Esophagus squamous epithelium (tissue), 5 donors: ENCODE measurements at regions of chr4 and their contacts with region 1.

Region 1: GRCh38 chr4:41882625-41883347 is 52.4 kb upstream of the TMEM33 start:
- DNase-seq: no peak
- H3K4me3 ChIP-seq: peak overlapping the region in 3 of 4 donors; percentile 25 to 62 (median 42)
- H3K27ac ChIP-seq: no peak overlapping the region
- H3K4me1 ChIP-seq: peaks cover 16 to 32% (median 19%) of the 10 kb centered on the region in 3 donors
- H3K27me3 ChIP-seq: peaks cover 16 to 98% (median 25%) of the 10 kb centered on the region in 4 donors
- CTCF ChIP-seq: peak; percentile 67 to 95 (median 80)
- POLR2A ChIP-seq: no peak

Region 2: GRCh38 chr4:41281038-41281634 is 601.6 kb before region 1 on chr4:
- intact Hi-C with region 1: loop called (anchors 10 kb)
- DNase-seq: no peak
- H3K4me3 ChIP-seq: no peak overlapping the region
- H3K27ac ChIP-seq: no peak overlapping the region
- H3K4me1 ChIP-seq: peaks cover 0 to 6% (median 0%) of the 10 kb centered on the region in 3 donors
- H3K27me3 ChIP-seq: peaks cover 0 to 10% (median 0%) of the 10 kb centered on the region in 4 donors
- CTCF ChIP-seq: peak; percentile 73 to 92 (median 86)
- POLR2A ChIP-seq: no peak

Region 3: DNA sequence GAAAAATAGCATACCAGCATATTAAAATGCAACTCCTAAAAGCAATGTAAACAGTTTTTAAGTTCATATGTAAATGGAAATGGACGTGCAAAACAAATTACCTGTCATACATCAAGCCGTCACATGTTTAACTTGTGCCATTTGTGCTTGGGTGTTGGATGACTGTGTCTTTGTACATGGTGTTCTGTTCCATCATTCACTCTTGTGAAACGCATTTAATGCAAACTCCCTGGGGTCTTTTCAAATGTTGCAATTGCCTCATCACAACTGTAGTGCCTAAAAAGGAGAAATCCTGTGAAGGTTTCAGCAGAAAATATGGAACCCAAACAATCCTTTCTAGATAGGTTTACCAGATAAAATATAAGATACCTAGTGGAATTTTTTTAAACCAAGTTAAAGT is 186.7 kb before region 1 on chr4:
- intact Hi-C with region 1: loop called (anchors 5 kb)
- DNase-seq: no peak
- H3K4me3 ChIP-seq: no peak overlapping the region
- H3K27ac ChIP-seq: no peak overlapping the region
- H3K4me1 ChIP-seq: no peaks in the 10 kb centered on the region
- H3K27me3 ChIP-seq: no peaks in the 10 kb centered on the region
- CTCF ChIP-seq: no peak
- POLR2A ChIP-seq: no peak